HepG2 (cell line): ENCODE measurements at regions of chr4 and their contacts with region 1.

Region 1: GRCh38 chr4:186297013-186297645 is 31.1 kb downstream of the F11 start:
- DNase-seq: peak; percentile 32
- ATAC-seq: peak; percentile 24; the same call in 2 of the 3 replicates
- H3K4me3 ChIP-seq: no peak overlapping the region
- H3K27ac ChIP-seq: no peak overlapping the region
- H3K4me1 ChIP-seq: peaks cover 6% of the 10 kb centered on the region; the same call in 1 of the 2 replicates
- H3K27me3 ChIP-seq: peaks cover 0 to 9% of the 10 kb centered on the region in 2 experiments; a peak in 1 of 5 replicates
- CTCF ChIP-seq: peak; percentile 71
- EP300 ChIP-seq: no peak
- POLR2A ChIP-seq: no peak
- RAD21 ChIP-seq: peak; percentile 55; the same call in 1 of the 2 replicates

Region 2: GRCh38 chr4:186554539-186554913 is 257.4 kb after region 1 on chr4:
- CTCF ChIA-PET with region 1: no interaction called
- POLR2A ChIA-PET with region 1: no interaction called
- in situ Hi-C with region 1: no loop called
- intact Hi-C with region 1: loop called (anchors 1 kb)
- DNase-seq: peak; percentile 14
- ATAC-seq: peak; percentile 83
- H3K4me3 ChIP-seq: peak overlapping the region; percentile 36 to 62 (median 48); a peak in 3 of 6 replicates
- H3K27ac ChIP-seq: no peak overlapping the region
- H3K4me1 ChIP-seq: peaks cover 8% of the 10 kb centered on the region
- H3K27me3 ChIP-seq: peaks cover 1 to 34% of the 10 kb centered on the region in 2 experiments; a peak in 3 of 5 replicates
- CTCF ChIP-seq: peak; percentile 27
- EP300 ChIP-seq: no peak
- POLR2A ChIP-seq: no peak
- RAD21 ChIP-seq: no peak